Endothelial cell of umbilical vein (primary cell): ENCODE measurements at regions of chr3 and their contacts with region 1.

Region 1: DNA sequence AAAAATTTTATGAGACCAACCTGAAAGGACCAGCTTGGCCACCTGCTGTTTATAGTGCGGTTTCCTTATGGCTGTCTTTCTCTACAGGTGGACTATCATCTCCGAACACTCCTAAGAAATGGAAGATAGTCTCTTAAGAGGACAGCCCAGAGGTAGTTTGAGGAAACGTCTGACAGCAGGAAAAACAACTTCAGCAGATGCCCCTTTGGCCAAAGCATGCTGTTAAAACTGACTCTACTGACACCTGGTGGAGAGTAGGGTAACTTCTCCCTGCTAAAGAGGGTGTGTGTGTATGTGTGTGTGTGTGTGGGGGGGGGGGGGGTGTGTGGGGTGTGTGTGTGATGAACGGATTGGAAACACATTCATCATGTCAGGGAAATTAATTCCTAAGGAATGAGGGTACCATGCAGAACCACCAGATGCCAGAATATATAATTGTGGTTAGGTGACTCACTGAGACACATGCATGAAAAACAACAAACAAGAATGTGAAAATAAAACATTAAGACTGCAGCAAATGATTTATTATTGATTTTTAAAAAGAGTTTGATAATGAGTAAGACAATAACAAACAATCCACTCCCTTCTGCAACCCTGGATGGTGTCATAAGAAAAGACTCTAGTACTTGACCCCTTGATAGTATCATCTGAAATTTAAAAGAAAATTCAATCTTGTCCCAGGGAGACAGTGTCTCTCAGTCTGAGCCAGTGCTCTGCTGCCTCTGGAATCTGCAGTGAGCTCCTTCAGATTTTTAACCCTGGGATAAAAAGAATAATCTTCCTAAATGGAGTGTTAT is 256.5 kb downstream of the THRB start:
- DNase-seq: peak; percentile 78
- H3K4me3 ChIP-seq: no peak overlapping the region
- H3K27ac ChIP-seq: no peak overlapping the region
- H3K4me1 ChIP-seq: peaks cover 23% of the 10 kb centered on the region
- H3K27me3 ChIP-seq: no peaks in the 10 kb centered on the region
- CTCF ChIP-seq: peak; percentile 55 to 75
- POLR2A ChIP-seq: no peak

Region 2: DNA sequence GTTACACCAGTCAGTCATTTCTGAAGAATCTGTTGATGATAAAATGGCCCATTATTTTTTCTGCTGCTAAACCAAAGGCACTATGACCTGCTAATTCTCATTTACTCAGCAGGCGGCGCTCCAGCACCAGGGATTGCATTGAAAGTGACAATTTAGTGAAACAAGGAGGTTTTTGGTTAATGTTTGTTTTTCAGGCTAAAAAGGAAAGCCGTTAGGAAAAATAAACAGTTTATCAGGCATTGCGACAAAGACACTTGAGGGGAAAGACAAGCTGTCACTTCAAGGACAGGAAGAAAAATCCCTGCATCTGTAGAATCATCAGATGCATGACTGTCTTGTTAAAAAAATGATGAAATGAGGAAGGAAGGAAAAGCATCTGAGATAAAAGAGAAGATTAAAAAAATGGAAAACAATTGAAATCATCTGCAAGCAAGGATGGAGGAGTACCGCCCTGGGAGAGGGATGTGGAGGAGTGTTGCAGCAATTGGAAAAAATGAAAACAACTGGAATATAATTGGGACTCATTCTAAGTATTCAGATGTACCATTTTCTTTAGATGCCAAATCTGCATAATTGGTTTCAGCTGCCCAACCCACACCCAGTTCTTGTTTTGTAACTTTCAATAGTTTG is 239.0 kb before region 1 on chr3:
- CTCF ChIA-PET with region 1: interaction called, 5 read pairs
- POLR2A ChIA-PET with region 1: no interaction called
- dilution Hi-C with region 1: no loop called
- intact Hi-C with region 1: loop called (anchors 1 kb)
- DNase-seq: peak; percentile 79
- H3K4me3 ChIP-seq: no peak overlapping the region
- H3K27ac ChIP-seq: no peak overlapping the region
- H3K4me1 ChIP-seq: peaks cover 3% of the 10 kb centered on the region
- H3K27me3 ChIP-seq: peaks cover 4 to 8% of the 10 kb centered on the region in 2 experiments
- CTCF ChIP-seq: peak; percentile 67 to 87
- POLR2A ChIP-seq: no peak

Region 3: GRCh38 chr3:24220859-24221657 is 17.1 kb before region 1 on chr3:
- CTCF ChIA-PET with region 1: interaction called, 3 read pairs
- POLR2A ChIA-PET with region 1: no interaction called
- dilution Hi-C with region 1: no loop called
- intact Hi-C with region 1: loop called (anchors 1 kb)
- DNase-seq: peak; percentile 79
- H3K4me3 ChIP-seq: no peak overlapping the region
- H3K27ac ChIP-seq: peak overlapping the region; percentile 31
- H3K4me1 ChIP-seq: peaks cover 5% of the 10 kb centered on the region
- H3K27me3 ChIP-seq: no peaks in the 10 kb centered on the region
- CTCF ChIP-seq: no peak
- POLR2A ChIP-seq: no peak

Region 4: DNA sequence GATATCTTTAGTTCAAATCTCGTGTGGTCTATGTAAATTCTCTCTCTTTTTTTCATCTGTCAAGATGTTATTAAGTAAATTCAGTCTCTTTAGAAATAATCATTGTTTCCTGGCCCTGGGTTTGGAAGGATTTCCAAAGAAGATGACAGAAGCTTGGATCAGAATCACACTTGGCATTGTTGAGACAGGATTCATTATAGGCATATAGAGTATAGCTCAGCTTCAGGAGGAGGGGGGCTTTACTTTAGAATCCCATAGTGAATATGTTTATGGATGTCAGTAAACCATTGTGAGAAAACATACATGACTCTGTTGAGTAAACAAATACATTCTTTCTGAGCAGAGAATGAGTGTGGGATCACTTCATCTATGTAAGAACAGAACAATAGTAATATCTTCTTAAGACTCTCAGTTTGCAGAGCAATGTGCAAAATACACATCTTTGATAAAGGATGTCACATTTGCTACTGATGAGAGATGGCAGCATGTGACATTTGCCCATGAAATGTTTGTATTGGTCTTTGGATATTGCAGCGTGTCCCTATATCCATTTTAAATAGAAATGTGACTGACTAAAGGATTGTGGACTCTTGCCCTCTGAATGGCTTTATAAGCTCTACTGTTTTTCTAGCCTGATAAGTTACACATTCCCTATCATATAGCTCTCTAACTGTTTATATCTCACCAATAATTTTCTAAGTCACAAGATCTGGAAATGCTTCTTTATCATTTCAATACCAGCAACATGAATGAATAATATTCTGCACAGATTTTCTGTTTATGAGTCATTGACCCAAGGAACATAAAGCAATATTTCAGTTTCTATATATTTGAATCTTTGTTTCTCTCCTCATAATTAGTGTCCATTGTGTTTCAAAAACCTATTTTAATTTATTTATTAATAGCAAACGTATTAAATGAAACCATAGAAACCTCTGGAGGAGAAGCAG is 352.0 kb after region 1 on chr3:
- CTCF ChIA-PET with region 1: no interaction called
- POLR2A ChIA-PET with region 1: no interaction called
- dilution Hi-C with region 1: no loop called
- intact Hi-C with region 1: loop called (anchors 1 kb)
- DNase-seq: peak; percentile 25
- H3K4me3 ChIP-seq: no peak overlapping the region
- H3K27ac ChIP-seq: no peak overlapping the region
- H3K4me1 ChIP-seq: peaks cover 37% of the 10 kb centered on the region
- H3K27me3 ChIP-seq: no peaks in the 10 kb centered on the region
- CTCF ChIP-seq: no peak
- POLR2A ChIP-seq: no peak